ENCODE measurements at regions of chr21 and their contacts with region 1.

Region 1: GRCh38 chr21:34362136-34362444 is 1.7 kb upstream of the KCNE2 start:
- DNase-seq: no peak
- ATAC-seq: peak in 1 of 2 experiments; percentile 23; a peak in 2 of 6 replicates
- H3K4me3 ChIP-seq: no peak overlapping the region
- H3K27ac ChIP-seq: no peak overlapping the region
- H3K4me1 ChIP-seq: 0 out of 3 replicates have a peak, but pooled peaks cover 2% of the 10 kb centered on the region
- CTCF ChIP-seq: no peak; the same call in 2 of the 3 replicates
- EP300 ChIP-seq: no peak
- POLR2A ChIP-seq: no peak
- RAD21 ChIP-seq: no peak; a peak in 1 of 5 replicates

Region 2: GRCh38 chr21:33212159-33212851 is 1149.8 kb before region 1 on chr21:
- CTCF ChIA-PET with region 1: no interaction called
- POLR2A ChIA-PET with region 1: no interaction called
- DNase-seq: no peak
- ATAC-seq: no peak
- H3K4me3 ChIP-seq: no peak overlapping the region
- H3K27ac ChIP-seq: no peak overlapping the region
- H3K4me1 ChIP-seq: no peaks in the 10 kb centered on the region
- CTCF ChIP-seq: no peak
- EP300 ChIP-seq: no peak
- POLR2A ChIP-seq: no peak
- RAD21 ChIP-seq: no peak

Region 3: DNA sequence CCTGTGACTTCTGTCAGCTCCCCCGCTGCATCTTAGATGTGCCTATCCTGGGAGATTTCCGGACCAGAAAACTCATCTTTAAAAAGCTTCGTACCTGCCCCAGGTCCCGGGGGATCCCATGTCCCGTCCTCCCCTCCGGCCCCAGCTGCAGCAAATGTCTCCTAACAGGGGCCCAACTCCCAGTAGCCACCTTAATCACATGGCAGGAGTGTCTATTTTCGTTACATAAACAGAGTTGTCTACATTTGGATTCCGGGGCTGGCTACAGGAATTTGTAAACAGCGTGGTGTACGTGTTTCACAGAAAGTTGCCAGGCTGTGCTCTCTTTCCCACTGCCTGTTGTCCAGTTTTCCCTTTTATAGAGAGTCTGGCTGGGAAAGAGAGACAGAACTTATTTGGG is 16.2 kb before region 1 on chr21:
- CTCF ChIA-PET with region 1: interaction called, 19 read pairs
- POLR2A ChIA-PET with region 1: no interaction called
- DNase-seq: no peak
- ATAC-seq: no peak
- H3K4me3 ChIP-seq: no peak overlapping the region
- H3K27ac ChIP-seq: no peak overlapping the region
- H3K4me1 ChIP-seq: no peaks in the 10 kb centered on the region
- CTCF ChIP-seq: no peak
- EP300 ChIP-seq: no peak
- POLR2A ChIP-seq: no peak
- RAD21 ChIP-seq: no peak

Region 4: GRCh38 chr21:34595457-34595856 is 233.4 kb after region 1 on chr21:
- CTCF ChIA-PET with region 1: interaction called, 10 read pairs
- POLR2A ChIA-PET with region 1: no interaction called
- DNase-seq: no peak
- ATAC-seq: no peak
- H3K4me3 ChIP-seq: no peak overlapping the region
- H3K27ac ChIP-seq: 0 out of 6 replicates have a peak overlapping the region, but pooled peaks of 1 of the 2 experiments have one; percentile 13
- H3K4me1 ChIP-seq: peaks cover 8% of the 10 kb centered on the region; the same call in 1 of the 3 replicates
- CTCF ChIP-seq: no peak
- EP300 ChIP-seq: no peak
- POLR2A ChIP-seq: no peak
- RAD21 ChIP-seq: no peak

Measured in A549 (cell line).